ENCODE measurements at regions of chr13 and their contacts with region 1.

Region 1: DNA sequence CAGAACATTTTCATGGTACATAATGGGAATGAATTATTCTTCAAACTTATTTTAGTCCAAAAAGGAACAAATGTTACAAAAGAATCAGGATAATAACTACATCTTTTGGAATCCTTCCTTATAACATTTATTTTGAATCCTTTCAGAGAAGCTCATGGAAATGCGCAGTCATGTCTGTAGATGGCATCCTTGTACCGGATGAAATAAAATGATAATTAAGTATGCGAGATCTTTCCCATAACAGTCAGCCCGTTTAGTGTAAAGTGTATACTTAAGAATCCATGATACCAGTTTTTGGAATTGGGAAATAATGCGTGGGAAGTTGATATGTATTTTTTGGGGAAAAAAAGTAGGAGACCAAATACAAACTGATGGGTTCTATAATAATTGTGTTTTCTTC is 418.8 kb downstream of the GPC5 start:
- DNase-seq: no peak
- ATAC-seq: peak in 1 of 8 donors; percentile 53
- H3K4me3 ChIP-seq: no peak overlapping the region
- H3K27ac ChIP-seq: no peak overlapping the region
- H3K4me1 ChIP-seq: no peaks in the 10 kb centered on the region
- H3K27me3 ChIP-seq: no peaks in the 10 kb centered on the region
- CTCF ChIP-seq: peak in 8 of 9 donors; percentile 16 to 60 (median 43)

Region 2: GRCh38 chr13:90534617-90535370 is 1282.5 kb before region 1 on chr13:
- intact Hi-C with region 1: no loop called
- DNase-seq: no peak
- ATAC-seq: peak in 5 of 8 donors; percentile 25 to 87 (median 74)
- H3K4me3 ChIP-seq: no peak overlapping the region
- H3K27ac ChIP-seq: peak overlapping the region in 4 of 10 donors; percentile 16 to 60 (median 54)
- H3K4me1 ChIP-seq: no peaks in the 10 kb centered on the region
- H3K27me3 ChIP-seq: no peaks in the 10 kb centered on the region
- CTCF ChIP-seq: no peak

Region 3: GRCh38 chr13:91767651-91768050 is 49.6 kb before region 1 on chr13:
- intact Hi-C with region 1: no loop called
- DNase-seq: no peak
- ATAC-seq: no peak
- H3K4me3 ChIP-seq: no peak overlapping the region
- H3K27ac ChIP-seq: no peak overlapping the region
- H3K4me1 ChIP-seq: no peaks in the 10 kb centered on the region
- H3K27me3 ChIP-seq: peaks cover 0 to 3% (median 0%) of the 10 kb centered on the region in 7 donors
- CTCF ChIP-seq: no peak

Region 4: DNA sequence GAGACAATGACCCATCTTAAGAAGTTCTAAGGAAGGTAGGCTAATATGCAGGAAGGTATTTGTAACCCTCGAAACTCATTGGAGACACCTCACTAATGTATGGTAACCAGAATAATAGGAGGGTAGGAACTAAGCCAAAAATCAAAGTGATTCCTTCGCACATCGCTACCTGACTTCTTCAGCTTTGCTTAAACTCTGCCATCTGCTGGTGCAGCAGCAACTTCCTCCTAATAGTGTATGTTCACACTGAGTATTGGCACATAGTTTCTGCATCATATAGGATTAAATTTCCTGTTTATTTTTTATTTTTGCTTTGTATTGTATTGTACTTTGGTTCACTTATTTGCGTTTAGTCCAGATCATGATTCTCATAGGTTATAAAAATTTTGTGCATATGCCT is 257.4 kb after region 1 on chr13:
- intact Hi-C with region 1: loop called in 3 of 10 experiments (anchors 5 kb)
- DNase-seq: no peak
- ATAC-seq: no peak
- H3K4me3 ChIP-seq: no peak overlapping the region
- H3K27ac ChIP-seq: no peak overlapping the region
- H3K4me1 ChIP-seq: no peaks in the 10 kb centered on the region
- H3K27me3 ChIP-seq: peaks cover 0 to 4% (median 0%) of the 10 kb centered on the region in 7 donors
- CTCF ChIP-seq: peak in 6 of 9 donors; percentile 6 to 43 (median 24)

Region 5: DNA sequence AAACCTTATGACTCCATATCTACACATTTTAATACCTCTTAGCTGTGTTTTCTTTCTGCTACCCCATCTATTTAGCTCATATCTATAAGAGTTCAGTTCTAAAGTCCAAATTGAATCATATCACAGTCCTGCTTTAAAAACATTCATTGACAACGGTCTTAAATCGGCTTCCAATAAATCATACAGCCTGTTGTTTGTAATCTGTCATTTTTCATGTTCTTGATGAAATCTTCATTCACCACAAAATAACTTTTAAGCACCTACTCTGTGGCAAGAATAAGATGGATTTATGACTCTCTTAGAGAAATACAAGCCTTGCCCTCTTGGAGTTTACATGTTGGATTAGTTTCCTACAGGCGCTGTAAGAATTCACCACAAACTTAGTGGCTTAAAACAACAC is 958.4 kb after region 1 on chr13:
- intact Hi-C with region 1: loop called in 1 of 10 experiments (anchors 5 kb)
- DNase-seq: no peak
- ATAC-seq: no peak
- H3K4me3 ChIP-seq: no peak overlapping the region
- H3K27ac ChIP-seq: no peak overlapping the region
- H3K4me1 ChIP-seq: no peaks in the 10 kb centered on the region
- H3K27me3 ChIP-seq: no peaks in the 10 kb centered on the region
- CTCF ChIP-seq: no peak

Measured in heart right ventricle (tissue), 16 donors.